Upper lobe of right lung (tissue), 1 donor: ENCODE measurements at regions of chr4 and their contacts with region 1.

Region 1: GRCh38 chr4:8410641-8411271 is 29.8 kb downstream of the ACOX3 start:
- DNase-seq: no peak
- ATAC-seq: peak; percentile 72
- H3K4me3 ChIP-seq: no peak overlapping the region
- H3K27ac ChIP-seq: no peak overlapping the region
- H3K4me1 ChIP-seq: no peaks in the 10 kb centered on the region
- H3K27me3 ChIP-seq: no peaks in the 10 kb centered on the region
- CTCF ChIP-seq: peak; percentile 16

Region 2: GRCh38 chr4:8158710-8159536 is 251.8 kb before region 1 on chr4 and contains the start of gene ABLIM2:
- intact Hi-C with region 1: no loop called
- DNase-seq: peak; percentile 99
- ATAC-seq: peak; percentile 98
- H3K4me3 ChIP-seq: peak within 1 kb of the TSS; percentile 85
- H3K27ac ChIP-seq: peak within 1 kb of the TSS; percentile 72
- H3K4me1 ChIP-seq: peaks cover 11% of the 10 kb centered on the region
- H3K27me3 ChIP-seq: peaks cover 10% of the 10 kb centered on the region
- CTCF ChIP-seq: no peak
- total RNA-seq, gene ABLIM2: 12.7 TPM

Region 3: DNA sequence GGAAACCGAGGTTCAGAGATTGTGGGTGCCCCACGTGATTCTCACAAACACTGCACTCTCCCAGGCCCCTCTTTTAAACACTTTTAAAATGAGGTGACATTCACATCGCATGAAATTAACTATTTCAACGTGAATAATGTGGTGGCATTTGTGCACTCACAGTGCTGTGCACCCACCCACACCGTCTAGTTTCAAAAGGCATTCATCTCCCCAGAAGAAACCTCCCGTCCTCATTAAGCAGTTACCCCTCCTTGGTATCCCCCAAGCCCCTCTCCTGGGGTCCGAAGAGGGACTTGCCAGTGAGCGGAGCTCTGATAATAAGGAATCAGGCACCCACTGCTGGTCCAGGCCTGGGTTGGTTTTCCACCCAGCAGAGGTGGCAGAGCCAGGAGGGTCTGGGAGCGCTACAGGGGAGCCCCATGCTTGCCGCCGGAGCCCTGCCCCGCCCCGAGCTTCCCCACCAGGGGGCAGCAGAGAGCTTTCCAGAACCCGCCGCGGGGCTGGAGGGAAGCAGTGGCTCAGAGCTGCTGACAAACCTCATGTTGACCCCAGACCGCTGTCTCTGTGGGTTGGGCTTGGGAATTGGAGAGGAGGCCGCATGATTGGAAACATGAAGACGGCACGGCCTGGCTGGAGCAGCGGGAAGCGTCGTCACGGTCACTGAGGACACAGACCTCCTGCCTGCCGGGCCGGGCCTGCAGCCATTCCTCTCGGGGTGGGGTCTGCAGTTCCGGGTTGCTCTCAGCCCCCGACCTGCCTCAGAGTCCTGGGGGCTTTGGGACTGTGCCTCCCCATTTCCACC is 168.7 kb before region 1 on chr4:
- intact Hi-C with region 1: loop called (anchors 5 kb)
- DNase-seq: peak; percentile 90
- ATAC-seq: peak; percentile 81
- H3K4me3 ChIP-seq: no peak overlapping the region
- H3K27ac ChIP-seq: peak overlapping the region; percentile 47
- H3K4me1 ChIP-seq: peaks cover 15% of the 10 kb centered on the region
- H3K27me3 ChIP-seq: no peaks in the 10 kb centered on the region
- CTCF ChIP-seq: peak; percentile 99

Region 4: GRCh38 chr4:8646296-8647093 is 235.7 kb after region 1 on chr4:
- intact Hi-C with region 1: no loop called
- DNase-seq: no peak
- ATAC-seq: no peak
- H3K4me3 ChIP-seq: no peak overlapping the region
- H3K27ac ChIP-seq: no peak overlapping the region
- H3K4me1 ChIP-seq: no peaks in the 10 kb centered on the region
- H3K27me3 ChIP-seq: peaks cover 6% of the 10 kb centered on the region
- CTCF ChIP-seq: no peak